MCF 10A (cell line): ENCODE measurements at regions of chr1 and their contacts with region 1.

Region 1: GRCh38 chr1:2227346-2228153 is 569 bp upstream of the SKI start:
- DNase-seq: peak; percentile 95
- H3K4me3 Mint-ChIP-seq: peak overlapping the region; percentile 74
- H3K27ac Mint-ChIP-seq: no peak overlapping the region
- H3K4me1 Mint-ChIP-seq: peaks cover 15% of the 10 kb centered on the region
- H3K27me3 Mint-ChIP-seq: no peaks in the 10 kb centered on the region
- CTCF ChIP-seq: no peak

Region 2: DNA sequence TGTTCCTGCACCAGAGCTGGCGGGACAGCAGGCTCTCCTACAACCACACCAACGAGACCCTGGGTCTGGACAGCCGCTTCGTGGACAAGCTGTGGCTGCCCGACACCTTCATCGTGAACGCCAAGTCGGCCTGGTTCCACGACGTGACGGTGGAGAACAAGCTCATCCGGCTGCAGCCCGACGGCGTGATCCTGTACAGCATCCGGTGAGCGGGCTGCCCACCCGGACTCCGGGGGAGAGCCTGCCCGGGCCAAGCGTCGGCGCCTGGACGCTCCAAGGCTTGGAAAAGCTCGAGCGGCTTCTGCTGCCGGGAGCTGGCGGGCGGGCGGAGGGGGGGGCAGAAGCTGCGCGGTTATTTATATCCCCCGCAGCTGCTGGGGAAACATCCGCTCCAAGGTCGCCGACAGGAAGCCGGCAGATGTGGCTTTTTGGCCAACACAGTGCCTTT is 202.0 kb before region 1 on chr1:
- CTCF ChIA-PET with region 1: no interaction called
- POLR2A ChIA-PET with region 1: no interaction called
- intact Hi-C with region 1: no loop called
- DNase-seq: no peak
- H3K4me3 Mint-ChIP-seq: no peak overlapping the region
- H3K27ac Mint-ChIP-seq: no peak overlapping the region
- H3K4me1 Mint-ChIP-seq: no peaks in the 10 kb centered on the region
- H3K27me3 Mint-ChIP-seq: peaks cover 17% of the 10 kb centered on the region
- CTCF ChIP-seq: no peak

Region 3: GRCh38 chr1:2189459-2190425 is 37.8 kb before region 1 on chr1:
- CTCF ChIA-PET with region 1: interaction called, 10 read pairs
- POLR2A ChIA-PET with region 1: interaction called, 15 read pairs
- intact Hi-C with region 1: no loop called
- DNase-seq: peak; percentile 95
- H3K4me3 Mint-ChIP-seq: peak overlapping the region; percentile 83
- H3K27ac Mint-ChIP-seq: peak overlapping the region; percentile 82
- H3K4me1 Mint-ChIP-seq: peaks cover 5% of the 10 kb centered on the region
- H3K27me3 Mint-ChIP-seq: no peaks in the 10 kb centered on the region
- CTCF ChIP-seq: no peak

Region 4: GRCh38 chr1:2212542-2213491 is 14.7 kb before region 1 on chr1:
- CTCF ChIA-PET with region 1: interaction called, 4 read pairs
- POLR2A ChIA-PET with region 1: interaction called, 23 read pairs
- intact Hi-C with region 1: loop called (anchors 1 kb)
- DNase-seq: peak; percentile 89
- H3K4me3 Mint-ChIP-seq: peak overlapping the region; percentile 16
- H3K27ac Mint-ChIP-seq: peak overlapping the region; percentile 83
- H3K4me1 Mint-ChIP-seq: peaks cover 14% of the 10 kb centered on the region
- H3K27me3 Mint-ChIP-seq: no peaks in the 10 kb centered on the region
- CTCF ChIP-seq: peak; percentile 13

Region 5: GRCh38 chr1:2514863-2515762 is 287.6 kb after region 1 on chr1:
- CTCF ChIA-PET with region 1: no interaction called
- POLR2A ChIA-PET with region 1: no interaction called
- intact Hi-C with region 1: no loop called
- DNase-seq: no peak
- H3K4me3 Mint-ChIP-seq: no peak overlapping the region
- H3K27ac Mint-ChIP-seq: no peak overlapping the region
- H3K4me1 Mint-ChIP-seq: no peaks in the 10 kb centered on the region
- H3K27me3 Mint-ChIP-seq: no peaks in the 10 kb centered on the region
- CTCF ChIP-seq: peak; percentile 26